ENCODE measurements at regions of chr18 and their contacts with region 1.

Region 1: DNA sequence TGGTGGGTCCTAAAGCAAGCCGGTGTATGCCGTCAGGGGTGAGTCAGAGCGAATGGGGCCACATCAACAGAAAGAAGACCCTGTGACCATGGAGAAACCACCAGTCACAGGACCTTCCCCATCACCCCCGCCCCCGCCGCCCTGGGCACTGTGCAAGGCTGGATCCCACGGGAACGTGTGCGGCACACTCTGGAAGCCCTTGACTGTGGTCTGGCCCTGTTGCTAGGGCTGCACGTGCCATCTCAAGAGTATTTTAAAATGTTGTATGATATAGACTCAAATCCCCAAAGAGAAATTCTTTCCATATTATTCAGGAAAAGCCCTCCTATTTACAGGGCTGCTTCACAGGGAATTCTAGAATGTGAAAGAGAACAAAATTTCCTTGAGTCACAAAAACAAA is 174.8 kb downstream of the BCL2 start:
- DNase-seq: no peak
- ATAC-seq: no peak
- H3K4me3 Mint-ChIP-seq: no peak overlapping the region
- H3K27ac Mint-ChIP-seq: no peak overlapping the region
- H3K4me1 Mint-ChIP-seq: peaks cover 23% of the 10 kb centered on the region
- H3K27me3 Mint-ChIP-seq: no peaks in the 10 kb centered on the region
- CTCF ChIP-seq: no peak

Region 2: GRCh38 chr18:63111671-63112402 is 32.9 kb before region 1 on chr18:
- CTCF ChIA-PET with region 1: no interaction called
- POLR2A ChIA-PET with region 1: no interaction called
- DNase-seq: no peak
- ATAC-seq: no peak
- H3K4me3 Mint-ChIP-seq: no peak overlapping the region
- H3K27ac Mint-ChIP-seq: no peak overlapping the region
- H3K4me1 Mint-ChIP-seq: peaks cover 2% of the 10 kb centered on the region; the same call in 1 of the 2 replicates
- H3K27me3 Mint-ChIP-seq: no peaks in the 10 kb centered on the region
- CTCF ChIP-seq: no peak

Region 3: DNA sequence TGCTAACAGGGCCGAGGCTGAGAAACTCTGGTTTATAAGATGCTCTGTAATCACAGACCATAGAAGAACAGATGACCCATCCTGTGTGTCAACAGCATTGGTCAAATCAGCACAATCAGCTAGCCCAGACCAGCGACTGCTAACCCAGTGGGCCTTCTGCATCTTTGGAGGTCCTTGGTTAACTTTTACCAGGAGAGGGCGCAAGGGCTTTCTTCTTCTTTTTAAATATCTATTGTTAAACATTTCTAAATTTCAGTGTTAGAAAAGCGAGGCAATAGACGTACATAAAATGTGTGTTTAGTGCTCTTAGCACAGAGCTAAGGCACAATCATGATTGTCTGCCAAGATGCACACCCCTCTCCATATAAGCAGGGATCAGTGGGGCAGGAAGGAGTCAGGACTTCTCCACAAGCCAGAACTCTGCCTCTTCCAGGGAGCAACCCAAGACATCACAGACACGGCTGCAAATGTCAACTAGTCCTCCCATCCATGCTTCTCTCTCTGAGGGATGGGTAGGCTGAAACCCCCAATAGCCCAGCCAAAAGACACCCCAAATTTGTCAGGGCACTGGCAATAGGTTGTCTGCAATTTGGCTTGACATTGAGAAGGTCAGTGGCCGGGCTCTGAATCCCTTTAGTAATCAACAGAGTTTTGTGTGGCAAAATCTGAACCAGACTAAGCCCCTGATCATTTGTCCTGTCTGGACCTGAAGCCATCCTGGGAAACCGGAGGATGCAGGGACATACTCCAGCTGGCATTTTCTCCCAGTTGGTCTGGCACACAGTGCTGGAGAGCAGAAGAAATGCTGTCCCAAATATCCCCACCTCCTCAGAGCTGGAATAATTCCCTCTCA is 13.4 kb before region 1 on chr18:
- CTCF ChIA-PET with region 1: interaction called, 10 read pairs
- POLR2A ChIA-PET with region 1: no interaction called
- DNase-seq: peak; percentile 45
- ATAC-seq: peak; percentile 86
- H3K4me3 Mint-ChIP-seq: no peak overlapping the region
- H3K27ac Mint-ChIP-seq: no peak overlapping the region
- H3K4me1 Mint-ChIP-seq: peaks cover 14% of the 10 kb centered on the region
- H3K27me3 Mint-ChIP-seq: no peaks in the 10 kb centered on the region
- CTCF ChIP-seq: peak; percentile 22

Region 4: DNA sequence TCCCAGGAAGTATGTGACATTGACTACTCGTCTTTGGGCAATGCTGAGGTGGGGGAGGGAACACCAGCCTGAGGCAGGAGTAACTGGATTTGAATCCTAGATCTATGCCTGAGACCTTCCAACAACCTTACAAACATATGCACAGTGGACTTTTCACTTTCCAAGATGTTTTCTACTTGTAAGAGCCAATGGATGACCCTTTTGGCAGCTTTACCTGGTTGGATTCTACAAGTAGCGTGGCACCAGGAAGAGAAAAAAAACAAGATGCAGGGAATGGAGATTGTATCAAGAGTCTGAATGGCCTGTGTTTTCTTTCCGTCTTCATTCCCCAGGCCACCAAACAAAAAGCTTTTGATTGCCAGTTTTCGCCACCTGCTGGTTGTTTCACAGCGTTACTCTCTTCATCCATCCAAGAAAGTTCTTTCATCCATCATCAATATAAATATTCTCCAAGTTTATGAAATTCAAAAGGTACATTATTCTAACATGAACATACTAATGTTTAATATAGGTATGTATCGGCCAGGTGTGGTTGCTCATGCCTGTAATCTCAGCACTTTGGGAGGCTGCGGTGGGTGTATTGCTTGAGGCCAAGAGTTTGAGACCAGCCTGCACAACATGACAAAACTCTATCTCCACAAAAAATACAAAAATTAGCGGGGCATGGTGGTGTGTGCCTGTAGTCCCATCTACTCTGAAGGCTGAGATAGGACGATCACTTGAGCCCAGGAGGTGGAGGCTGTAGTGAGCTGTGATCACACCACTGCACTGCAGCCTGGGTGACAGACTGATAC is 178.3 kb after region 1 on chr18:
- CTCF ChIA-PET with region 1: no interaction called
- POLR2A ChIA-PET with region 1: no interaction called
- DNase-seq: peak; percentile 37
- ATAC-seq: peak; percentile 11
- H3K4me3 Mint-ChIP-seq: no peak overlapping the region
- H3K27ac Mint-ChIP-seq: no peak overlapping the region
- H3K4me1 Mint-ChIP-seq: peaks cover 21% of the 10 kb centered on the region
- H3K27me3 Mint-ChIP-seq: peaks cover 21% of the 10 kb centered on the region
- CTCF ChIP-seq: peak; percentile 59